ENCODE measurements at regions of chr12 and their contacts with region 1.

Region 1: DNA sequence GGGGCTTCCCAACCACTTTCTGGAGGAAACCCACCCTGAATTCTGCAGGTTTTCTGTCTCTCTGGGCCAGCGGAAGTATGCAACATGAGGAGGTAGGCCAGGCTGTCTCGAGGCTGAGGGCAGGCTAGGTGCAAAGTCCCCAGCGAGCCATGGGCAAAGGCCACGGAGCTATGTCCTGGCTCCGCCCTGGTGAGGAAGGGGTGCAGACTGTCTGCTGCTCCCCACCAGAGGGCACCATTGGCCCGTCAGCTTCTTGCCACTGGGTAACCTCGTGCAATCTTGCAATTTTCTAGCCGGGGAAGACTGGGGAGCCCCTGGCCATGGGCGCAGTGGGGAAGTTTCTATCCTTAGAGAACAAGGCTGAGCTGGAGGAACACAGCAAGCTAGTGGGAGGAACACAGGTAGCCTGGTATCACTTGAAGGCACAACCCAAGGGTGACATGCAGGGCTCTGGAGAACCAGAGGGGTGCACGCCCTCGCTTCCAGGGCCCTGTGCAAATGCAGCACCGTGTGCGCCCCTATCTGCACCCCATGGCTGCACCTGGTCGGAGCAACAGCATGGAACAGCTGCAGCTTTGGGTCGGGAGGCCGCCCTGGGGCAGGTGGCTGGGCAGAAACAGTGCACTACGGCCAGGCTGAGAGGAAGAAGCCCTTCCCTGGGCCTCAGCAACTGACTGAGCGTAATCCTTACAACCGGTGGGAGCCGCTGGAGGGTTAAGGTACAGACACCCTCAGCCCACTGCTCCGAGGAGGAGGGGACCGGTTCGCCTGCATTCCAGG is 27.6 kb upstream of the RPLP0 start:
- DNase-seq: peak; percentile 49
- ATAC-seq: peak; percentile 98
- H3K4me3 ChIP-seq: no peak overlapping the region
- H3K27ac ChIP-seq: no peak overlapping the region
- H3K4me1 ChIP-seq: peaks cover 32% of the 10 kb centered on the region
- H3K27me3 ChIP-seq: no peaks in the 10 kb centered on the region
- CTCF ChIP-seq: peak; percentile 94 to 97 (median 96)
- EP300 ChIP-seq: no peak
- POLR2A ChIP-seq: no peak
- RAD21 ChIP-seq: peak; percentile 96

Region 2: GRCh38 chr12:120200364-120200800 is 28.1 kb before region 1 on chr12:
- CTCF ChIA-PET with region 1: interaction called, 48 read pairs
- POLR2A ChIA-PET with region 1: interaction called, 3 read pairs
- RAD21 ChIA-PET with region 1: interaction called, 17 read pairs
- SMC1A ChIA-PET with region 1: interaction called, 26 read pairs
- in situ Hi-C with region 1: no loop called
- intact Hi-C with region 1: no loop called
- DNase-seq: no peak
- ATAC-seq: no peak
- H3K4me3 ChIP-seq: peak overlapping the region; percentile 92
- H3K27ac ChIP-seq: peak overlapping the region; percentile 87
- H3K4me1 ChIP-seq: peaks cover 17% of the 10 kb centered on the region
- H3K27me3 ChIP-seq: no peaks in the 10 kb centered on the region
- CTCF ChIP-seq: no peak
- EP300 ChIP-seq: no peak
- POLR2A ChIP-seq: no peak
- RAD21 ChIP-seq: no peak

Region 3: GRCh38 chr12:120249875-120250795 is 21.7 kb after region 1 on chr12:
- CTCF ChIA-PET with region 1: interaction called, 36 read pairs
- POLR2A ChIA-PET with region 1: interaction called, 3 read pairs
- RAD21 ChIA-PET with region 1: interaction called, 14 read pairs
- SMC1A ChIA-PET with region 1: interaction called, 9 read pairs
- in situ Hi-C with region 1: no loop called
- intact Hi-C with region 1: no loop called
- DNase-seq: no peak
- ATAC-seq: peak; percentile 75
- H3K4me3 ChIP-seq: no peak overlapping the region
- H3K27ac ChIP-seq: no peak overlapping the region
- H3K4me1 ChIP-seq: peaks cover 35% of the 10 kb centered on the region
- H3K27me3 ChIP-seq: no peaks in the 10 kb centered on the region
- CTCF ChIP-seq: no peak
- EP300 ChIP-seq: no peak
- POLR2A ChIP-seq: no peak
- RAD21 ChIP-seq: no peak

Region 4: GRCh38 chr12:120265473-120266179 is 37.1 kb after region 1 on chr12 and contains the start of gene PXN:
- CTCF ChIA-PET with region 1: interaction called, 287 read pairs
- POLR2A ChIA-PET with region 1: interaction called, 17 read pairs
- RAD21 ChIA-PET with region 1: interaction called, 170 read pairs
- SMC1A ChIA-PET with region 1: interaction called, 152 read pairs
- in situ Hi-C with region 1: loop called (anchors 10 kb)
- intact Hi-C with region 1: loop called (anchors 1 kb)
- DNase-seq: peak; percentile 28
- ATAC-seq: peak; percentile 95
- H3K4me3 ChIP-seq: peak within 1 kb of the TSS; percentile 63
- H3K27ac ChIP-seq: no peak within 1 kb of the TSS
- H3K4me1 ChIP-seq: 0 out of 2 replicates have a peak, but pooled peaks cover 3% of the 10 kb centered on the region
- H3K27me3 ChIP-seq: peaks cover 1 to 4% of the 10 kb centered on the region in 2 experiments; a peak in 3 of 4 replicates
- CTCF ChIP-seq: peak; percentile 67 to 87 (median 74)
- EP300 ChIP-seq: no peak
- POLR2A ChIP-seq: peak; percentile 78
- RAD21 ChIP-seq: peak; percentile 81
- polyA plus RNA-seq, gene PXN: 2.5 to 2.6 TPM

Region 5: DNA sequence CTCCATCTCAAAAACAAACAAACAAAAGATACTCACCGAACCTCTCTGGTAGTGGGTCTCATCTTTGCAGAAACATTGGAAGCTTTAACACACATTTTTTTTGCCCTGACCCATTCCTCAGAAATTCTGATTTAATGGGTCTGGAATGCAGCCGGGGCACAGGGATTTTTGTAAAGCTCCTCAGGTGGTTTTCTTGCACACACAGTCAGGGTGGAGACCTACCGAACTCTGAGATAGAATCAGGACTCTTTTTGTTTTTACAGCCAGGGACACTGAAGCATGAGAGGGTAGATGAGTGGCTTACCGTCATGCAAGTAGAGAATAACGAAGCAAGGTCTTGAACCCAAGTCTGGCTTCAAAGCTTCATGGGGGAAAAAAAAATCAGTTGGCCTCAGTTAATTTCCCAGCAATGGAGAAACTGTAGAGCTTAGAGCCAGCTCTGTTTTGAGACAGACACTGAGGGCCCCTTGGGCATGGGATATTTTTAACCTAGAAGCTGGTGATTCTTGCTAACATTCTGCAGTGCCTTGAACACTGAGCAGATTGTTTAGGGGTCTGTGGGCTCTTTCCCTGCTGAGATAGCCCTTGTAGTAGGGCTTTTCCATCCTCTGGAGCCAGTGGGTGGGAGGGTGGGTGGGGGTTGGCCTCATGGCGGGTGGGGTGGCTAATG is 58.5 kb after region 1 on chr12:
- CTCF ChIA-PET with region 1: interaction called, 28 read pairs
- POLR2A ChIA-PET with region 1: interaction called, 12 read pairs
- RAD21 ChIA-PET with region 1: interaction called, 17 read pairs
- SMC1A ChIA-PET with region 1: interaction called, 30 read pairs
- in situ Hi-C with region 1: no loop called
- intact Hi-C with region 1: loop called (anchors 1 kb)
- DNase-seq: no peak
- ATAC-seq: no peak
- H3K4me3 ChIP-seq: no peak overlapping the region
- H3K27ac ChIP-seq: no peak overlapping the region
- H3K4me1 ChIP-seq: peaks cover 9% of the 10 kb centered on the region
- H3K27me3 ChIP-seq: no peaks in the 10 kb centered on the region
- CTCF ChIP-seq: no peak
- EP300 ChIP-seq: no peak
- POLR2A ChIP-seq: no peak
- RAD21 ChIP-seq: no peak

Region 6: DNA sequence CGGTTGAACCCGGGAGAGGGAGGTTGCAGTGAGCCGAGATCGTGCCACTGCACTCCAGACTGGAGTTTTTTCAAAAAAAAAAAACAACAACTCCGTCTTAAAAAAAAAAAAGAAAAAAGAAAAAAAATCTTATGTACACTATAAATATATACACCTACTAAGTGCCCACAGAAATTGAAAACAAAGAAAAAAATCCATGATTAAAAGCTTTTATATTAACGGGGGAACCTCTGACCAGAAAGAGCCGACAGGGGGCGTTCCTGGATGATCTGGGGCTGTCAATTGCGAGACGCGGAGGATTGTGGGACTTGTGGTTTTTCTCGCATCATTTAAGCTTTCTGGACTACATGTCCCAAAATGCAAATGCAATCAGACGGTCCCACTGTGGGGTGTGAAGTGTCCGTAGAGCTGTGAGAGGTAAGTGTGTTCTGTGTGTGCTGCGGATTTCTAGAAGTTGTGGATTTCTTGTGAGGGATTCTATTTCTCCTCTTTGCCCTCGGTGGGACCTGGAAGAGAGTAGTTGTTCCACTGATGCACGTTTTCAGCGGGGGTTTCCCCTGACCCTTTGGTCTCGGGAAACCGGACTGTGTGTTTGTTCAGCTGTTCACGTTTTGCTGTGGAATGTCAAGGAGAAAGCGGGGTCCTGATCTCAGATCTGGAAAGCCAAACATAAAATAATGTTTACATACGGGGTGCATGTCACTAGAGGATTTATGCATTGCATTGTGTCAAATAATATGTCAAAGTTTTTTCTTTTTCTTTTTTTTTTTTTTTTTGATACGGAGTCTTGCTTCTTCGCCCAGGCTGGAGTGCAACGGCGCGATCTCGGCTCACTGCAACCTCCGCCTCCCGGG is 73.7 kb after region 1 on chr12 and contains the start of gene SIRT4:
- CTCF ChIA-PET with region 1: interaction called, 20 read pairs
- POLR2A ChIA-PET with region 1: interaction called, 5 read pairs
- RAD21 ChIA-PET with region 1: interaction called, 4 read pairs
- SMC1A ChIA-PET with region 1: interaction called, 6 read pairs
- in situ Hi-C with region 1: no loop called
- intact Hi-C with region 1: no loop called
- DNase-seq: peak; percentile 88
- ATAC-seq: peak; percentile 100
- H3K4me3 ChIP-seq: peak within 1 kb of the TSS; percentile 85
- H3K27ac ChIP-seq: peak within 1 kb of the TSS; percentile 20; the same call in 1 of the 2 replicates
- H3K4me1 ChIP-seq: no peaks in the 10 kb centered on the region
- H3K27me3 ChIP-seq: no peaks in the 10 kb centered on the region
- CTCF ChIP-seq: peak; percentile 61 to 90 (median 84)
- EP300 ChIP-seq: no peak
- POLR2A ChIP-seq: no peak
- RAD21 ChIP-seq: peak; percentile 33; the same call in 1 of the 2 replicates
- polyA plus RNA-seq, gene SIRT4: 0.79 to 0.98 TPM